Uterus (tissue), 4 donors: ENCODE measurements at regions of chr17 and their contacts with region 1.

Region 1: GRCh38 chr17:29412780-29413565 is 22.8 kb downstream of the TAOK1 start:
- DNase-seq: no peak
- H3K4me3 ChIP-seq: no peak overlapping the region
- H3K27ac ChIP-seq: no peak overlapping the region
- H3K4me1 ChIP-seq: no peaks in the 10 kb centered on the region
- H3K27me3 ChIP-seq: no peaks in the 10 kb centered on the region
- CTCF ChIP-seq: no peak
- POLR2A ChIP-seq: no peak

Region 2: DNA sequence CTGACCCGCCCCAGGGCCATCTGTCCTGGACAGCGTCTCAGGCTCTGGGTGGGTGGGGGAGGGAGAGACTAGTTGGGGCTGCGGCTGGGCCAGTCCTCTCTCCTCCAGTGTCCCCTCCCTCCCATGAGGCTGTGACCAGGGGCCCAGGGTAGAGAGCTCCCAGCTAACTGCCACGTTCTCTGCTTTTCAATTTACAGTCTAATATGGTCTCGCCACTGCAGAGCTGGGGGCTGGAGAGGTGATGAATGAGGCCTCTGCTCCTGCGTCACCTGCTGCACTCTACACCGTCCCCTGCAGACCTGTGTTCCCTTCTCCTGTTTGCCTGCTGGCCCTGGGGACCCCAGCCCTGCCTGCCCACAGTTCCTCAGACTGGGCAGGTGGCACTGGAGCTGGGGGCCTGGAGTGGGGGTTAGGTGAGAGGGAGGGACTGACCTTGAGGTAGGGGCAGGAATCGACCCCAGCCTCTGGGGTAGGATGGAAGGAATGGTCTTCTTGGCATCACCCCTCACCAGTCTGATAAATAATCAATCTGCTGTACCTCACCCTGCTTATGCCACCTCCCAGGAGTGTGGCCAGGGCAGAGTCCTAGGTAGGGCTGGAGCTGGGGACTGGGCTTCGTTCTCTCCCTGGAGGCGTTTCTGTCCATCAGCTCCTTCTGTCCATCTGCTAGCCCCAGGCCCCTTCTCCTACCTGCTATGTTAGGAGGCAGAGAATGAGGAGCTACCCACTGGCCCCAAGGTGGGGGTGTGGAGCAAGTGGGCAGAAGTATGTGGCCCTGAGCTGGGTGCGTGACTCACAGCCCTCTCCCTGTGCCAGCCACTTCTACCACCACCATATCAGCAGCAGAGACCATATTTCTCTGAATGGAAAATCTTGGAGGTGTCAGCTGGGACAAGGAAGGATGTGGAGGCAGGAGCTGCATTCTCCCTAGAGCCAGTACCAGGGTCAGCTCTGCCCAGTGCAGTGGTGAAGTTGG is 420.1 kb before region 1 on chr17:
- intact Hi-C with region 1: loop called (anchors 10 kb)
- DNase-seq: no peak
- H3K4me3 ChIP-seq: no peak overlapping the region
- H3K27ac ChIP-seq: no peak overlapping the region
- H3K4me1 ChIP-seq: no peaks in the 10 kb centered on the region
- H3K27me3 ChIP-seq: no peaks in the 10 kb centered on the region
- CTCF ChIP-seq: no peak
- POLR2A ChIP-seq: no peak

Region 3: GRCh38 chr17:29483503-29483902 is 70.5 kb after region 1 on chr17:
- intact Hi-C with region 1: no loop called
- DNase-seq: no peak
- H3K4me3 ChIP-seq: no peak overlapping the region
- H3K27ac ChIP-seq: no peak overlapping the region
- H3K4me1 ChIP-seq: no peaks in the 10 kb centered on the region
- H3K27me3 ChIP-seq: no peaks in the 10 kb centered on the region
- CTCF ChIP-seq: no peak
- POLR2A ChIP-seq: no peak

Region 4: DNA sequence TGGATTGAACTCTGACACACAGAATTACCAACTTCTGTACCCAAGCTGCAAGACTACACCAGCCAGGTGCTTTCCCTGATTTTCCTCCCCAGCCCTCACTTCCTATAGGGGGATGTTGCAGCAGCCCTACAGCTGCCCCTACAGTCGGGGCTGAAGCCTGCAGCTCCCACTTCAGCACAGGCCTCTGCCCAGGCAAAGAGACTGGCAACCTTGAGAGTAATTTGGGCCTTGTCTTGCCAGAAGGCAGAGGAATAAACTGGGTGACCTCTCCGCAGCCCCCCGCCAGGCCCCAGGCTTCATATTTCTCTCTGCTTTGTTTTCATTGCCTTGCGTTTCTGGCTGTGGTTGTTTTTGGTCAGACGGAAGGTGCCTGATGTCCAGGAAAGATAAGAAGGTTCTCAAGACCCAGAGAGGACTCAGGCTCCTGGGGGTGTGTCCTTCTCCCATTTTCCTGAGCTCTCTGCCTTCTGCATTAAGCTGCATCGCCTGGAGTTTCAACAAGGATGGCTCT is 790.6 kb after region 1 on chr17:
- intact Hi-C with region 1: no loop called
- DNase-seq: no peak
- H3K4me3 ChIP-seq: no peak overlapping the region
- H3K27ac ChIP-seq: no peak overlapping the region
- H3K4me1 ChIP-seq: no peaks in the 10 kb centered on the region
- H3K27me3 ChIP-seq: no peaks in the 10 kb centered on the region
- CTCF ChIP-seq: no peak
- POLR2A ChIP-seq: no peak